ENCODE measurements at regions of chr13 and their contacts with region 1.

Region 1: DNA sequence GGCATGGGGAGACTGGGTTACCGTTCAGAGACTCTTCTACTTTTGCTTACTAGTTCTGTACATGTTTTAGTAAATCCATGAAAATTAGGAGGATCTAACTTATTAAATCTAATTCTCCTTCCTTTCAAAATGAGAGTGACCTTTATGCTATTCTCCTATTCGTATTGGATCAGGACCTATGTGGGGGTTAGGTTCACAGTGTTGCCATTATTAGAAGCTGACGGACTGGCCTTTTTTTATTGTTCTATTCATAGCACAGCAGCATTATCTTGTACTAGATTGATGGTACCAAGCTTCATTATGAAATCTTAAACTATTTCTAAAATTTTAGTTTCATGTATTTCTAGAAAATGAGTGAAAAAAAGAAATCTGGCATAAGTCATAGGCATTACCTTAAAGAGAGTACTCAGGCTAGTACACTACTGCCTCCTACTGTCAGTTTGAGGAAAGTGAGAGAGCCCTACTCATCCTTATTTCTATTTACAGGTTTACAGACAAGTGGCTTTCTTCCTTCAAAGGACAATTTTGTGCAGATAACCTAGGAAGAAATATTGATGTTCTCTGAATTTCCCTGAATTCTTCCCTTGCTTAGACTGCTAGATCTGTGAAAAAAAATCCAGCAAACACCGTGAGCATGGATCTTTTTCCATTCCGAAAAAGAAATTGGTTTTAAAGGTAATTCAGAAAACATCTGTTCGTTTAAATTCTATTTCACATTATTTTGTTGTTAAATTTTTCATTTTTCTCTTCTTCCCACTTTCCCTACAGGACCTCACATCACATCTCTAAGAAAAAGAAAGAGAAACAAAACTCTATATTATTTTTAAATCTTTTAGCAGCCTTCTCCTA is 485.5 kb downstream of the DIAPH3 start:
- DNase-seq: peak; percentile 49 to 73 (median 66)
- H3K4me3 ChIP-seq: no peak overlapping the region
- H3K27ac ChIP-seq: no peak overlapping the region
- H3K4me1 ChIP-seq: peaks cover 0 to under 1% (median 0%) of the 10 kb centered on the region in 4 experiments
- H3K27me3 ChIP-seq: peaks cover 0 to 15% (median 2%) of the 10 kb centered on the region in 5 experiments

Region 2: GRCh38 chr13:59391696-59392095 is 286.5 kb before region 1 on chr13:
- CTCF ChIA-PET with region 1: interaction called, 86 read pairs
- POLR2A ChIA-PET with region 1: no interaction called
- DNase-seq: peak; percentile 77 to 91 (median 88)
- H3K4me3 ChIP-seq: peak overlapping the region in 1 of 7 experiments; percentile 25
- H3K27ac ChIP-seq: no peak overlapping the region
- H3K4me1 ChIP-seq: peaks cover 0 to 8% (median 3%) of the 10 kb centered on the region in 4 experiments
- H3K27me3 ChIP-seq: no peaks in the 10 kb centered on the region

Measured in common myeloid progenitor, CD34-positive (primary cell).